Naive thymus-derived CD4-positive, alpha-beta T cell (primary cell): ENCODE measurements at regions of chr13 and their contacts with region 1.

Region 1: GRCh38 chr13:25901460-25902376 is 150.1 kb downstream of the SHISA2 start:
- DNase-seq: peak in 7 of 9 donors; percentile 34 to 82 (median 72)
- ATAC-seq: peak; percentile 95
- H3K4me3 ChIP-seq: no peak overlapping the region
- H3K4me3 Mint-ChIP-seq: peak overlapping the region in 4 of 10 donors; percentile 1 to 9 (median 5)
- H3K27ac ChIP-seq: peak overlapping the region; percentile 24
- H3K27ac Mint-ChIP-seq: peak overlapping the region in 4 of 9 donors; percentile 12 to 67 (median 33)
- H3K4me1 ChIP-seq: peaks cover 15 to 66% of the 10 kb centered on the region in 2 donors
- H3K4me1 Mint-ChIP-seq: peaks cover 0 to 26% (median 25%) of the 10 kb centered on the region in 7 donors
- H3K27me3 ChIP-seq: no peaks in the 10 kb centered on the region
- H3K27me3 Mint-ChIP-seq: peaks cover 0 to 3% (median 0%) of the 10 kb centered on the region in 5 donors

Region 2: DNA sequence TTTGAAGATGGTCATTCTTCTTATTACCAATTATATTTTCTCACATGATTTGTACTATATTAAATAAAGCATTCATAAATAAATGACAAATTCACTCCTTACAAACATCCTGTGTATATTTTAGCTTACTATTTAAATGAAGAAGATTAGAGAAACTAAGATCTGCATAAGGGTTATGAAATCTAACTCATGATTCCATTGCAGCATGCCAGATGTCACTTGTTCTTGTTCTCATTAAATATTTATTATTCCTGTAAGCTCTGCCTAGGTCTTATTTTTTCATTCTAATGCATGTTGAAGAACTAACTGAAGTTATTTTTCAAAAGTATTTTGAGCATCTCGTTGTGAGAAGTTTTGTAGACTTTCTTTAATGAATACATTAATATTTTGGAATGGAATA is 581.9 kb before region 1 on chr13:
- CTCF ChIA-PET with region 1: no interaction called
- POLR2A ChIA-PET with region 1: no interaction called
- intact Hi-C with region 1: no loop called
- DNase-seq: no peak
- ATAC-seq: no peak
- H3K4me3 ChIP-seq: no peak overlapping the region
- H3K4me3 Mint-ChIP-seq: no peak overlapping the region
- H3K27ac ChIP-seq: no peak overlapping the region
- H3K27ac Mint-ChIP-seq: no peak overlapping the region
- H3K4me1 ChIP-seq: no peaks in the 10 kb centered on the region
- H3K4me1 Mint-ChIP-seq: peaks cover 0 to 15% (median 6%) of the 10 kb centered on the region in 7 donors
- H3K27me3 ChIP-seq: no peaks in the 10 kb centered on the region
- H3K27me3 Mint-ChIP-seq: no peaks in the 10 kb centered on the region

Region 3: DNA sequence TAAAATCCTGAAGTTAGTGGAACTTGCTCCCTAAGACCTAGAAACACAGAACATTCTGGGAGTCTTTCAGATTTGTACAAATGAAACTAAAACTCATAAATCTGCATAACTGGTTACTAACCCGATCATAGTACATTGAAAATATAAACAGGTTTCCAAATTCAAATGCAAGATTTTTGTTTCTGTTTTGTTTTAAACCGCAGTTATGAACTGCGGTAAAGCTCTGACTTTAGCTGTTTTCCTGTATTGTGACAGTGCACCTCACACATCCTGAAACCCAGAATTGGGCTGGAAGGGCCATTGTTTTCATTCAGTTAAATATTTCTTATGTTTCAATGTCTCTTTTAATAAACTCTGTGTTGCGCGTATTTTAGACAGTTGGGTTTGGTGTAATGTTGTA is 54.6 kb before region 1 on chr13:
- CTCF ChIA-PET with region 1: no interaction called
- POLR2A ChIA-PET with region 1: no interaction called
- intact Hi-C with region 1: loop called (anchors 1 kb)
- DNase-seq: peak in 7 of 9 donors; percentile 17 to 65 (median 47)
- ATAC-seq: peak; percentile 75
- H3K4me3 ChIP-seq: peak overlapping the region; percentile 38
- H3K4me3 Mint-ChIP-seq: peak overlapping the region; percentile 26 to 75 (median 66)
- H3K27ac ChIP-seq: peak overlapping the region; percentile 39
- H3K27ac Mint-ChIP-seq: peak overlapping the region; percentile 6 to 91 (median 72)
- H3K4me1 ChIP-seq: peaks cover 13 to 23% of the 10 kb centered on the region in 2 donors
- H3K4me1 Mint-ChIP-seq: peaks cover 21 to 48% (median 38%) of the 10 kb centered on the region in 7 donors
- H3K27me3 ChIP-seq: no peaks in the 10 kb centered on the region
- H3K27me3 Mint-ChIP-seq: peaks cover 0 to 3% (median 0%) of the 10 kb centered on the region in 5 donors

Region 4: DNA sequence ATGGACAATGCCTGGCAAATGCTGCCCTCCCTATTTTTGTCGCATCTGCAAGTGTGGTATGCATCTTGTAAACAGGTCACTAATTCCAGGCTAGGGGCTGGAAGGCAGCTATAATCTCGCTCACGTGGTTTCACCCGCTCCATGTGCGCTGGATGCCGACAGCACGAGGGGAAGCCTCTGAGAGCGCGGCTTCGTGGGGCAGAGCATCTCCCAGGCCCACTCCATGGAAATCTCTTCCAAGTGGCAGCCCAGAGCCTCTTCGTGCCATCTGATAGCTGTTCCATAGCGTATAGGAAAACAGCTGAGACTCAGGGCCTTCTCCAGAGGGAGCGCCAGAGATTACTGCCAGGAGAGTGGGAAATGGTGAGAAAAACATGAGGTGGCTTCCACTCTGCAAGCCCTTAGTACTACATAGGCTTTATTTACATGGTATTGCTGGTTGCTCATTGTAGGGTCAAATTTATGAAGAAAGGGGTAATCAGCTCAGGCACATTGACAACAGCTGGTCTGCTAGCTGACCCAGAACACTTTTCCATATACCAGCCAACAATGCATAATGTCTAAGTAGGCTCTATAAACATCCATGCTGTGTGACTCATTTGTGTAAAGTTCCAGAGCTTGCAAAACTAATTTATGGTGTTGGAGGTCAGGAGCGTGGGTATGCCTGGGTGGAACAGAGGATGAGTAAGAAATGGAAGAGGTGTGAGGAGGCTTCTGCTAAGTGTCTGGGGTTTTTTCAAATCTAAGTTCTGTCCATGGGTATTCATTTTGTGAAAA is 15.1 kb before region 1 on chr13:
- CTCF ChIA-PET with region 1: no interaction called
- POLR2A ChIA-PET with region 1: interaction called, 35 read pairs
- intact Hi-C with region 1: loop called (anchors 1 to 2 kb)
- DNase-seq: peak in 1 of 9 donors; percentile 49
- ATAC-seq: no peak
- H3K4me3 ChIP-seq: no peak overlapping the region
- H3K4me3 Mint-ChIP-seq: peak overlapping the region in 1 of 10 donors; percentile 12
- H3K27ac ChIP-seq: no peak overlapping the region
- H3K27ac Mint-ChIP-seq: peak overlapping the region in 7 of 9 donors; percentile 1 to 86 (median 68)
- H3K4me1 ChIP-seq: peaks cover 0 to 36% of the 10 kb centered on the region in 2 donors
- H3K4me1 Mint-ChIP-seq: peaks cover 27 to 83% (median 63%) of the 10 kb centered on the region in 7 donors
- H3K27me3 ChIP-seq: no peaks in the 10 kb centered on the region
- H3K27me3 Mint-ChIP-seq: no peaks in the 10 kb centered on the region

Region 5: DNA sequence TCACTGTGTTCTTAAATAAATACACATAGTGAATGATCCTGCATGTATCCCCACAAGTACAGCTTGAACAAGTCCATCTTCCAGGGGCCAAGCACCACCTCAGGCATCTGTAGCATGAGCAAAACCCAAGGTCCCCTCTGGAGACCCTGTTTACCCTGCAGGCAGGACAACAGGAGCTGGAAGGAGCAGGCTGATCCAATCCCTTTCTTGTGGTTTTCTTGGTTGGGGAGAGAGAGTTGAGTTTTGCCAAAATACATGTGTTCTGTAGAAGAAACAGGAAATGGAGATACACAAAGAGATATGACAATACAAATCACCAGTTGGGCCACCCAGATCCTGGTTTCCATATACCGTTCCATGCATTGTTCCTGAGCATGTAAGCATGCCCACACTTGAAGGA is 57.3 kb after region 1 on chr13:
- CTCF ChIA-PET with region 1: no interaction called
- POLR2A ChIA-PET with region 1: no interaction called
- intact Hi-C with region 1: loop called (anchors 5 kb)
- DNase-seq: peak in 2 of 9 donors; percentile 20 to 29
- ATAC-seq: no peak
- H3K4me3 ChIP-seq: no peak overlapping the region
- H3K4me3 Mint-ChIP-seq: peak overlapping the region in 9 of 10 donors; percentile 10 to 70 (median 56)
- H3K27ac ChIP-seq: no peak overlapping the region
- H3K27ac Mint-ChIP-seq: peak overlapping the region in 3 of 9 donors; percentile 67 to 80 (median 80)
- H3K4me1 ChIP-seq: peaks cover 4 to 29% of the 10 kb centered on the region in 2 donors
- H3K4me1 Mint-ChIP-seq: peaks cover 12 to 56% (median 37%) of the 10 kb centered on the region in 7 donors
- H3K27me3 ChIP-seq: no peaks in the 10 kb centered on the region
- H3K27me3 Mint-ChIP-seq: peaks cover 0 to 7% (median 0%) of the 10 kb centered on the region in 5 donors

Region 6: DNA sequence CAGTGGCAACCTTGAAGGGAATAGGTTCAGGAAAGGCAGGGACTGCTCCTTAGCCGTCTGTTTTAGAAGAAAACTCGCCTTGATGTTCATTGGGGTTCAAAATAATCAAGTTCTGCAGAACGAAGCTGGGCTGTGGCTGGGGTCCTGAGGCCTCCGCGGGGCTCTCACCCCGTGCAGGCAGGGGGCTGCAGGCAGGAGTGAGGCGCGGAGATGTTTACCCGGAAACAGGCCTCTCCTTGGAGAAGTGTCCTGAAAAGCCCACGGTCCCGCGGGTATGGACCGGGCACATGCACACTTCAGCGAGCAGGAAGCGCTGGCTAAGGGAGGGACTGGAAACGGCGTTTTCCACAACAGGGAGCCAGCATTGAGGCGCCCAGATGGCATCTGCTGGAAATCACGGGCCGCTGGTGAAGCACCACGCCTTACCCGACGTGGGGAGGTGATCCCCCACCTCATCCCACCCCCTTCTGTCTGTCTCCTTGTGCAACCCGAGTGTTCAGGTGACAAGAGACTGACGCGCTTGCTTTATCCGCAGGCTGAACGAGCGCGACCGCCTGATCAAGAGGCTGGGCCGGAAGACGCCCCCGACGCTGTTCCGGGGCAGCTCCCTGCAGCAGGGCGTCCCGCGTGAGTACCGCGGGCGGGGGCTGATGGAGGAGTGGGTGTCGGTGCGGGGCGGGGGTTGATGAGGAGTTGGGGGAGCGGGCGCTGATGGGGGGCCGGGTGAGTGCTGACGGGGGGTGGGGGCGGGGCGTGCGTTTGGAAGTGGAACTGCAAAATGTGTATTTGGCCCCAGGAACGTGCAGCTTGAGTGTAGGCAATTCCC is 110.5 kb after region 1 on chr13:
- CTCF ChIA-PET with region 1: no interaction called
- POLR2A ChIA-PET with region 1: interaction called, 4 read pairs
- intact Hi-C with region 1: loop called in 1 of 2 experiments (anchors 2 kb)
- DNase-seq: peak; percentile 51 to 88 (median 75)
- ATAC-seq: peak; percentile 95
- H3K4me3 ChIP-seq: peak overlapping the region; percentile 77
- H3K4me3 Mint-ChIP-seq: peak overlapping the region; percentile 81 to 89 (median 86)
- H3K27ac ChIP-seq: peak overlapping the region; percentile 90
- H3K27ac Mint-ChIP-seq: peak overlapping the region; percentile 67 to 95 (median 90)
- H3K4me1 ChIP-seq: peaks cover 0 to 8% of the 10 kb centered on the region in 2 donors
- H3K4me1 Mint-ChIP-seq: peaks cover 11 to 65% (median 48%) of the 10 kb centered on the region in 7 donors
- H3K27me3 ChIP-seq: no peaks in the 10 kb centered on the region
- H3K27me3 Mint-ChIP-seq: no peaks in the 10 kb centered on the region